ENCODE measurements at regions of chr4 and their contacts with region 1.

Region 1: DNA sequence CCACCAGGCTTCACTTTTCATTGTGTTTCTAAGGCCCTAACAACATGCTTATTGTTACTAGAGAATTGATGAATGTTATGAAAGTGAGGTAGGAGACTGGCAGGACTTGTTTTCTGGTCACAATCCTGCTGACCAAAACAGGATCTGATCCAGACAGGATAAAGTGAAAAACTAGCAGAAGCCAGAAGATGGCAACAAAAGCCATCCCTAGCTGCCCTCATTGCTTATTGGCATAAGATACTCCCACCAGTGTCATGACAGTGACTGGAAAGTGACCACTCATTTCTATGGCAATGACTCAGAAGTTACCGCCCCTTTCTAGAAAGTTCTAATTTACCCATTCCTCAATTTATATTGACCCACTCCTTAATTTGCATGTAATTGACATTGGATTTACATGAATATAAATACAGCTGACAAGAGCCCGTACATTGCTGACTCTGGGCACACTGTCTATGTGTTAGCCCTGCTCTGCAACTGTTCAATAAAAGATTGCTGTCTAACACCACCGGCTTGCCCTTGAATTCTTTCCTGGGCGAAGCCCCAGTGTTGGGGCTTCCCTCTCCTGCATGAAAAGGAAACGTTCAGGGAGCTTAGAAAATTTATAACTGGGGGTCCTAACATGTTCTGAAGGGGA is 30.0 kb upstream of the FGG start:
- DNase-seq: no peak
- ATAC-seq: no peak
- H3K4me3 ChIP-seq: no peak overlapping the region
- H3K27ac ChIP-seq: no peak overlapping the region
- H3K4me1 ChIP-seq: no peaks in the 10 kb centered on the region
- H3K27me3 ChIP-seq: no peaks in the 10 kb centered on the region
- CTCF ChIP-seq: no peak
- POLR2A ChIP-seq: no peak
- RAD21 ChIP-seq: no peak

Region 2: DNA sequence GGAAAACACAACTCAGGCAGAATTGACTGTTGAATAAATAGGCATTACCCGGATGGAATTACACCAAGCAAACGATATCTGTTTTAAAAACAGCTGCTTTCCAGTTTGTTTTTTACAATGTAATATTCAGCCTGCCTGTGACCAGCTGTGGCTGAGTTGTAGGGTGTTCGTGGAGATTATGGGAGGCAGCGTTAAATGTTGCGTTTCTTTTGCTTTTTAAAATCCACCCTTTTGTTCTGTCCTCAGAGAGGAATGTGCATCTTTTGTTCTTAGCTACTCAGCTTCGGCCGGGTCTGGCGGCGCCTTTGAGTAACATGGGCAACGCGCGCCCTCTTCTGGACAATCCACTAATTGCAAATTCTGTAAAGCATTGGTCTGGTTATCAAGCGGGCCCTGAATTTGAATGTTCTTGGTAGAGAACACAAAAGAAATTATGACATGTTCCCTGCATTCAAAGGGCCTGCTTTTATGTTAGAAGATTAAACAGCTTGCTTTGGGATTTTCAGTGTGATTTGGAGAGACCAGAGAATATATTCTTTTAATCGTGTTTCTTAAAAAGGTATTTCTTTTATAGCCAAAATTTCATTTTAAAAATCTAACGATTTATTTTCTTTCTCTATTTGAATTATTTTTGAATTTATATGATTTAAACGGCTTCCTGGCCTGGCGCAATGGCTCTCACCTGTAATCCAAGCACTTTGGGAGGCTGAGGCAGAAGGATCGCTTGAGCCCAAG is 1514.6 kb before region 1 on chr4:
- CTCF ChIA-PET with region 1: no interaction called
- POLR2A ChIA-PET with region 1: no interaction called
- dilution Hi-C with region 1: no loop called
- in situ Hi-C with region 1: no loop called
- intact Hi-C with region 1: no loop called
- DNase-seq: peak; percentile 77
- ATAC-seq: peak; percentile 95
- H3K4me3 ChIP-seq: no peak overlapping the region
- H3K27ac ChIP-seq: no peak overlapping the region
- H3K4me1 ChIP-seq: no peaks in the 10 kb centered on the region
- H3K27me3 ChIP-seq: no peaks in the 10 kb centered on the region
- CTCF ChIP-seq: peak; percentile 94
- POLR2A ChIP-seq: no peak
- RAD21 ChIP-seq: peak; percentile 91

Region 3: GRCh38 chr4:154292589-154292988 is 349.9 kb before region 1 on chr4:
- CTCF ChIA-PET with region 1: no interaction called
- POLR2A ChIA-PET with region 1: no interaction called
- dilution Hi-C with region 1: no loop called
- in situ Hi-C with region 1: no loop called
- intact Hi-C with region 1: no loop called
- DNase-seq: no peak
- ATAC-seq: no peak
- H3K4me3 ChIP-seq: no peak overlapping the region
- H3K27ac ChIP-seq: no peak overlapping the region
- H3K4me1 ChIP-seq: no peaks in the 10 kb centered on the region
- H3K27me3 ChIP-seq: no peaks in the 10 kb centered on the region
- CTCF ChIP-seq: no peak
- POLR2A ChIP-seq: no peak
- RAD21 ChIP-seq: no peak

Region 4: DNA sequence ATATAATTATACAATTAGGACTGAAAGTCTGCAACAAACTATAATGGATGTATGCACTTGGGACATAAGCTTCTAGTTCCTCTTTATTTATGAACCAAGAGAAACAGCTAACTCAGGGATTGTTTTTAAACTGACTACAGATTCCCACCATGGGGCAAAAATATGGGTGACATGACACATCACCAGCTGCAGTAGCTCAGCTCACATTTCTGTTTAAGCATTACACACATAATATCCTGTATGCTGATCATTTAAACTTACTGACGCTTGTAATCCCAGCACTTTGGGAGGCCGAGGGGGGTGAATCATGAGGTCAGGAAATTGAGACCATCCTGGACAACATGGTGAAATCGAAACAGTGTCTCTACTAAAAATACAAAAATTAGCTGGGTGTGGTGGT is 68.2 kb before region 1 on chr4:
- CTCF ChIA-PET with region 1: no interaction called
- POLR2A ChIA-PET with region 1: no interaction called
- dilution Hi-C with region 1: no loop called
- in situ Hi-C with region 1: no loop called
- intact Hi-C with region 1: no loop called
- DNase-seq: peak; percentile 19
- ATAC-seq: no peak
- H3K4me3 ChIP-seq: no peak overlapping the region
- H3K27ac ChIP-seq: no peak overlapping the region
- H3K4me1 ChIP-seq: no peaks in the 10 kb centered on the region
- H3K27me3 ChIP-seq: no peaks in the 10 kb centered on the region; the same call in 1 of the 2 replicates
- CTCF ChIP-seq: no peak
- POLR2A ChIP-seq: no peak
- RAD21 ChIP-seq: no peak

Region 5: GRCh38 chr4:154588198-154588597 is 54.3 kb before region 1 on chr4:
- CTCF ChIA-PET with region 1: no interaction called
- POLR2A ChIA-PET with region 1: no interaction called
- dilution Hi-C with region 1: no loop called
- in situ Hi-C with region 1: no loop called
- intact Hi-C with region 1: no loop called
- DNase-seq: no peak
- ATAC-seq: no peak
- H3K4me3 ChIP-seq: no peak overlapping the region
- H3K27ac ChIP-seq: no peak overlapping the region
- H3K4me1 ChIP-seq: no peaks in the 10 kb centered on the region
- H3K27me3 ChIP-seq: no peaks in the 10 kb centered on the region
- CTCF ChIP-seq: no peak
- POLR2A ChIP-seq: no peak
- RAD21 ChIP-seq: no peak

Region 6: DNA sequence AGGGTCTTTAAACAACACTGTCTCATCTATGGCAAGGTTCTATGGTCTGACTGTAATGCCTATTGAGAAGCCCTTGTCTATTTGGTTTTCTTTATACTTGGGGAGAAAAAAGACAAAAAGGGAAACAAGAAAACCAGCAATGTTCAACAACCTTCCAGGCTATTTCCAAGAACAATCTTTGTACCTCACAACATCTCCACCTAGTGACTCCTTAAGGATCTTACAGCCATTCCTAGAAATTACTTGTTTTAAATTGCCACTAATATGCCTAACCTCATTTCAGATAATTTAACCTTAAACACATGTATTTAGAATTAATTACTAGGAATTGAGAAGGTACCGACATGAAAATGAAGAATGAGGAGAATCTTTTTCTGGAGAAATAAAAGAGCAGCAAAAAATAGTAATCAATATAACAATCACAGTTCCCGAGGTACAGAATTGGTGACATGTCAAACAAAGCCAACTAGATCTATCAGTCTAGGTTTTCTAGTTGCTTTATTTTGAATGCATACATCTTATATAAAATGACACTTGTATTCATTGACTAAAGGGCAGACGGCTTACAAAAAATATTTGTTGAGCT is 137.0 kb after region 1 on chr4:
- CTCF ChIA-PET with region 1: no interaction called
- POLR2A ChIA-PET with region 1: no interaction called
- dilution Hi-C with region 1: no loop called
- in situ Hi-C with region 1: no loop called
- intact Hi-C with region 1: loop called (anchors 5 kb)
- DNase-seq: peak; percentile 39
- ATAC-seq: peak; percentile 61
- H3K4me3 ChIP-seq: no peak overlapping the region
- H3K27ac ChIP-seq: no peak overlapping the region
- H3K4me1 ChIP-seq: no peaks in the 10 kb centered on the region
- H3K27me3 ChIP-seq: no peaks in the 10 kb centered on the region
- CTCF ChIP-seq: peak; percentile 56
- POLR2A ChIP-seq: no peak
- RAD21 ChIP-seq: peak; percentile 44; the same call in 1 of the 2 replicates